Lower leg skin (tissue), 4 donors: ENCODE measurements at regions of chr19 and their contacts with region 1.

Region 1: GRCh38 chr19:39125554-39126311 is at the start of gene PAK4:
- DNase-seq: peak; percentile 97 to 99
- H3K4me3 ChIP-seq: peak within 1 kb of the TSS; percentile 77
- CTCF ChIP-seq: peak in 1 of 3 donors; percentile 8
- POLR2A ChIP-seq: no peak
- total RNA-seq, gene PAK4: 30.9 to 65.7 (median 40.1) TPM

Region 2: GRCh38 chr19:39187559-39187957 is 61.8 kb after region 1 on chr19:
- intact Hi-C with region 1: loop called (anchors 10 kb)
- DNase-seq: no peak
- H3K4me3 ChIP-seq: no peak overlapping the region
- CTCF ChIP-seq: no peak
- POLR2A ChIP-seq: no peak